ENCODE measurements at regions of chr19 and their contacts with region 1.

Region 1: DNA sequence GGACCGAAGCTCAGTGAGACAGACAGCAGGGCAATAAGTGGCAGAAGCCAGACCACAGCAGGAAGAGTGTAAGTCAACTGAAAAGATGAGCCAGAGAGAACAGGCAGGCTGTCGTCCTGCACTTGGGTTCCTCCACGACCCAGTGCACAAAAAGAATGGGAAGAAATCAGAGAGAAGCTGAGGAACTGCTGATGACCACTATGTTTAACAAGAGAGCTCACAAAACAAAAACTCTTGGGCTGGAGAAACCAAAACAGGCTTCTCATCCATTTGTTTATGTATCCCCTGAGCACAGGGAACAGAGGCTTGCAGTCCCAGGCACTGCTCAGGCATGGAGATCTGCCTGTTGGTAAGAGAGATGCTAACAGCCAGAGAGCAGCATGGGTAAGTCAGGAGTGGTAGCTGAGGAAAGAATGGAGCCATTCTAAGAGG is 14.0 kb downstream of the AKAP8L start:
- DNase-seq: no peak
- H3K4me3 ChIP-seq: no peak overlapping the region
- H3K27ac ChIP-seq: no peak overlapping the region
- H3K4me1 ChIP-seq: peaks cover 4% of the 10 kb centered on the region
- H3K27me3 ChIP-seq: no peaks in the 10 kb centered on the region
- CTCF ChIP-seq: no peak

Region 2: GRCh38 chr19:15463861-15464371 is 59.1 kb after region 1 on chr19:
- CTCF ChIA-PET with region 1: no interaction called
- dilution Hi-C with region 1: loop called (anchors 5 kb)
- in situ Hi-C with region 1: no loop called
- intact Hi-C with region 1: no loop called
- DNase-seq: no peak
- H3K4me3 ChIP-seq: no peak overlapping the region
- H3K27ac ChIP-seq: no peak overlapping the region
- H3K4me1 ChIP-seq: no peaks in the 10 kb centered on the region
- H3K27me3 ChIP-seq: peaks cover 1% of the 10 kb centered on the region
- CTCF ChIP-seq: no peak

Measured in mammary epithelial cell (primary cell).